Activated B cell treated with CpG ODN at 0.5 μM for 24 hours (primary cell): ENCODE measurements at regions of chr11 and their contacts with region 1.

Region 1: GRCh38 chr11:66790640-66791039 is 52.6 kb upstream of the RCE1 start:
- DNase-seq: no peak
- ATAC-seq: no peak
- H3K4me3 Mint-ChIP-seq: no peak overlapping the region
- H3K27ac Mint-ChIP-seq: no peak overlapping the region
- H3K4me1 Mint-ChIP-seq: peaks cover 27% of the 10 kb centered on the region
- H3K27me3 Mint-ChIP-seq: no peaks in the 10 kb centered on the region
- CTCF ChIP-seq: no peak

Region 2: GRCh38 chr11:66800720-66801428 is 10.2 kb after region 1 on chr11:
- CTCF ChIA-PET with region 1: no interaction called
- POLR2A ChIA-PET with region 1: interaction called, 10 read pairs
- intact Hi-C with region 1: no loop called
- DNase-seq: no peak
- ATAC-seq: peak; percentile 77
- H3K4me3 Mint-ChIP-seq: peak overlapping the region; percentile 42
- H3K27ac Mint-ChIP-seq: peak overlapping the region; percentile 86
- H3K4me1 Mint-ChIP-seq: peaks cover 68% of the 10 kb centered on the region
- H3K27me3 Mint-ChIP-seq: no peaks in the 10 kb centered on the region
- CTCF ChIP-seq: no peak

Region 3: DNA sequence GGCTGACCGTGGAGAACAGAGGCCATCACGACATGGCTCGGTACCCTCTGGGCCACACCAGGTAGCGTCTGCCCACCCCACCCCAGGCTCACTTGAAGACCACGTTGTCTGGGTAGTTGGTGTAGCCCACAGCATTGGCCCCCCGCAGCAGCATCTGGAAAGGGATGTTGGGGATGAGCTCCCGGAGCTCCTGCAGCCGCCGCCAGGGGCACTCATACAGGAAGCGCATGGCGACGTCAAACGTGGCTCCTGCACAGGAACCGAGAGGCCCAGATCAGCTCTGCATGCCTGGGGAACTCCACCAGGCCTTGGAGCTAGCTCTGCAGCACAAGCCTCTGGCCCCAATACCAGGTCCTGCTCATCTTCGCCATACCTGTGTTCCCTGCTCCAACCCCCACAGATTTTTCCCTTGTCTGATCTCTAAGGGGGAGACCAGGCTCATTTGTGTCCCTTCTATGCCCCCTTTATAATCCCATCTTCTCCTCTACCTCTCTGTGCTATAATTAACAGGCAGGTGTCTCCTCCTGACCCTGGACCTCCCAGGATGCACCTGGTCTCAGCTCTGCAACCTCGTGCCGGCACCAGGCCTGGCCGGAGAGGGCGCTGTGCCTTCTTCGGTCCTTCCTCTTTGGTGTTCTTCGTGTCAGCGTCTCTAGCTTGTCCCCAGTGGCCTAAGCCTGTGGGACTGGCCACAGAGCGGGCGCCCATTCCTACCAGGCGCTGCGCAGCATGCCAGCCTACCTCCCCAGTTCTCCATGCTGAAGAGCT is 61.2 kb after region 1 on chr11:
- CTCF ChIA-PET with region 1: no interaction called
- POLR2A ChIA-PET with region 1: no interaction called
- intact Hi-C with region 1: no loop called
- DNase-seq: no peak
- ATAC-seq: peak; percentile 9
- H3K4me3 Mint-ChIP-seq: no peak overlapping the region
- H3K27ac Mint-ChIP-seq: no peak overlapping the region
- H3K4me1 Mint-ChIP-seq: peaks cover 16% of the 10 kb centered on the region
- H3K27me3 Mint-ChIP-seq: no peaks in the 10 kb centered on the region
- CTCF ChIP-seq: no peak